ENCODE measurements at regions of chr14 and their contacts with region 1.

Region 1: DNA sequence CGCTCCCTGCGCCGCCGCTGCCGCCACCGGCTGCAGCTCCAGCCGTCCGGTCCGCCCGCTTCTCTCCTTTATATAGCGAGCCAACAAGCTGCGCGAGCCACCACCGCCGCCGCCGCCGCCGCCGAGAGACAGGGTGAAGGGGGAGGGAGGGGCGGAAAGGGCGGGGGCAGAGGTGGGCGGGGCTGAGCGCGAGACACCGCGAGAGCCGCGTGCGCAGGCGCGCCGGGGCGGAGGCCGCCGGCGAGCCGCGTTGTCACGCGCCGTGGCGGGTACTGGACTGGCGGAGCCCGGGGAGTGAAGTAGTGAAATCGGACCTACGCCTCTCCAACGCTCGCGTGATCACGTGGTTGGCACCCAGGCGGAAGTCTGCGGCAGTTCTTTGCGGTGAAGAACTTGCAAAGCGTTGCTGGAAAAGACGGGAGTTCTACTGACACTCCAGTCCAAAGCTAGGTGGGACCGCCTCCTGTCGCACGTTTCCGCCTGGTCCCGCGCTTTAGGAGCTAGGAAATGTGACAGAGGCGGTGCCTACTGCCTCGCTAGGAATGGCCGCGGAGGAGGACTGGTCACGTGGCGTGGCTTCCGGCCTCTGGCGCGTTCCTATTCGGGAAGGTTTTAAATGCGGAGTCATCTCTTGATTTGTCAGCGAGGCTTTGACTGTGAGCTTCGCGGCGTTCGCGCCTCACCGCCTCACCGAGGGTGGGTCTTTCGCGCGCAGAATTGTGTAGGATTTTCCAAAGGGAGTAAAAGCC is at the start of gene GTF2A1:
- DNase-seq: peak; percentile 95 to 96
- H3K4me3 ChIP-seq: peak within 1 kb of the TSS; percentile 77
- H3K4me3 Mint-ChIP-seq: peak within 1 kb of the TSS; percentile 97
- H3K27ac Mint-ChIP-seq: peak within 1 kb of the TSS; percentile 98
- H3K4me1 ChIP-seq: peaks cover 23% of the 10 kb centered on the region
- H3K4me1 Mint-ChIP-seq: peaks cover 9% of the 10 kb centered on the region
- H3K27me3 ChIP-seq: no peaks in the 10 kb centered on the region
- H3K27me3 Mint-ChIP-seq: peaks cover 3% of the 10 kb centered on the region
- CTCF ChIP-seq: no peak
- total RNA-seq, gene GTF2A1: 35.1 and 42.7 TPM in 2 replicates

Region 2: GRCh38 chr14:81295958-81296923 is 75.2 kb after region 1 on chr14:
- CTCF ChIA-PET with region 1: no interaction called
- POLR2A ChIA-PET with region 1: no interaction called
- intact Hi-C with region 1: no loop called
- DNase-seq: no peak
- H3K4me3 ChIP-seq: no peak overlapping the region
- H3K4me3 Mint-ChIP-seq: no peak overlapping the region
- H3K27ac Mint-ChIP-seq: no peak overlapping the region
- H3K4me1 ChIP-seq: no peaks in the 10 kb centered on the region; the same call in 1 of the 2 replicates
- H3K4me1 Mint-ChIP-seq: peaks cover 2% of the 10 kb centered on the region
- H3K27me3 ChIP-seq: no peaks in the 10 kb centered on the region
- H3K27me3 Mint-ChIP-seq: no peaks in the 10 kb centered on the region
- CTCF ChIP-seq: no peak

Region 3: DNA sequence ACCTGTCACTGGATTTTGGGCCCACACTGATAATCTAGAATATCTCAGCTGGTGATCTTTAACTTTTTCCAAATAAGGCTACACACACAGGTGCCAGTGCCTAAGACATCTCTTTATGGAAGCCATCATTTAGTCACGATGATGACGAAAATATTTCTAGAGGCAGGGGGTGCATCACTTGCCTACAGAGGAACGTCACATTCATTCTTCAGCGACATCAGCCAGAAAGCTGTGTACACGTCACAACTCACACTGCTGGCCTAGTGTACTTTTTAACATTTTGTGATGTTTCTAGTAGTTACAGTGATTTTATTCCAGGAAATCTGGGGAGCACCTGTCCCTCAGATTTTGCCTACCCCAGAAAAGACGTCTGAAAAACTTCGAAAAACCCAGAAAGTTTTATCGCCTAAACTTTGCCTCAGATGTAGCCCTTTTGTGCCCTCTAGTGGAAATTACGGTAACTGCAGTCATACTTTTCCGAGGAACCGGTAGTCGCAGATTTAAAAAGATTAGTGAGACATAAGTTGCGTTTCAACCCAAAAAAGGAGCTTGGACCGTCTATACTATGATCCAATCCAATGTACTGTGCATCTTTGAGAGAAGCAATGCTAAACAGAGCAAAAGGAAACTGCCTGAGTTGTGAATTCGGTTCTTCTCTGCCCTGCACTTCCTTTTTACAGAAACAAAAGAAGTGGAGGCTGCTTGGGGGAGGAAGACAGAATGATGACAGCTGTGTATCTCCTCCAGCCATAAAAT is 243.4 kb after region 1 on chr14:
- CTCF ChIA-PET with region 1: no interaction called
- POLR2A ChIA-PET with region 1: interaction called, 4 read pairs
- intact Hi-C with region 1: loop called (anchors 1 kb)
- DNase-seq: peak in 1 of 2 experiments; percentile 74
- H3K4me3 ChIP-seq: peak overlapping the region; percentile 19
- H3K4me3 Mint-ChIP-seq: peak overlapping the region; percentile 55
- H3K27ac Mint-ChIP-seq: no peak overlapping the region
- H3K4me1 ChIP-seq: no peaks in the 10 kb centered on the region
- H3K4me1 Mint-ChIP-seq: no peaks in the 10 kb centered on the region
- H3K27me3 ChIP-seq: no peaks in the 10 kb centered on the region
- H3K27me3 Mint-ChIP-seq: no peaks in the 10 kb centered on the region
- CTCF ChIP-seq: peak; percentile 68 to 78

Region 4: GRCh38 chr14:81516986-81517797 is 296.2 kb after region 1 on chr14:
- CTCF ChIA-PET with region 1: no interaction called
- POLR2A ChIA-PET with region 1: interaction called, 3 read pairs
- intact Hi-C with region 1: loop called (anchors 2 kb)
- DNase-seq: peak; percentile 66 to 77
- H3K4me3 ChIP-seq: no peak overlapping the region
- H3K4me3 Mint-ChIP-seq: peak overlapping the region; percentile 53
- H3K27ac Mint-ChIP-seq: peak overlapping the region; percentile 82
- H3K4me1 ChIP-seq: peaks cover 34% of the 10 kb centered on the region
- H3K4me1 Mint-ChIP-seq: peaks cover 26% of the 10 kb centered on the region
- H3K27me3 ChIP-seq: no peaks in the 10 kb centered on the region
- H3K27me3 Mint-ChIP-seq: no peaks in the 10 kb centered on the region
- CTCF ChIP-seq: no peak

Measured in Caco-2 (cell line).